Natural killer cell (primary cell): ENCODE measurements at regions of chr5 and their contacts with region 1.

Region 1: DNA sequence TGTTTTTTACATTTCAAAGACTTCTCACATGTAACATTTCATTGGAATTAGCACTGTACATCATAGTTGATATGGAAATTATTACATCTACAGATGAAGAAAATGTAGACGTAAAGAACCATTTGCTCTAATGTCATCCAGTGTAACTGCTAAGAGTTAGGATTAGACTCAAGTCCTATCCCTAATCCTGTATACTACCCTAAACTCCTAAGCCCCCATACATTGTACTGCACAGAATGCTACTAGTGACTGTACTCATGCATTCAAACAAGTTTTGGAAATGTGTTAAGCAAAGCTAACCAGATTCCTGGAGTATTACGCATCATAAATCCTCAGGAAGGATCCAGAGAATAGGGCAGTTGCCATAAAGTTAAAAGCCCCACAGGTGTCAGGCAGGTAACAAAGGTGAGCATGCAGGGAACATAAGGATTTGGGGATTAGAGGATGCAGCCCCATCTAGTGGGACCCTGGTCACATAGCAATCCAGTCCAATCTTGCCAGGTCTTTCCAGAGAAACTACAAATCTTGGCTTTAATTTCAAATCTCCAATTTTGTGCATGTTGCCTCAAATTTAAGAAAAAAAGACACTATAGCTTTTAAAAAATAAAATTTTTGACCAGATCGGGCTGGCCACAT is 32.0 kb downstream of the HAVCR1 start:
- DNase-seq: peak in 1 of 2 donors; percentile 36
- ATAC-seq: no peak
- H3K4me3 ChIP-seq: no peak overlapping the region
- H3K4me3 Mint-ChIP-seq: no peak overlapping the region
- H3K27ac ChIP-seq: peak overlapping the region; percentile 46
- H3K27ac Mint-ChIP-seq: peak overlapping the region; percentile 90 to 91
- H3K4me1 ChIP-seq: peaks cover 70% of the 10 kb centered on the region
- H3K4me1 Mint-ChIP-seq: peaks cover 78 to 89% of the 10 kb centered on the region in 2 donors
- H3K27me3 ChIP-seq: no peaks in the 10 kb centered on the region
- H3K27me3 Mint-ChIP-seq: no peaks in the 10 kb centered on the region
- CTCF ChIP-seq: no peak

Region 2: GRCh38 chr5:155767470-155767869 is 1259.4 kb before region 1 on chr5:
- intact Hi-C with region 1: loop called (anchors 5 kb)
- DNase-seq: peak in 1 of 2 donors; percentile 66
- ATAC-seq: peak; percentile 79 to 93 (median 88)
- H3K4me3 ChIP-seq: no peak overlapping the region
- H3K4me3 Mint-ChIP-seq: peak overlapping the region; percentile 43
- H3K27ac ChIP-seq: peak overlapping the region; percentile 70
- H3K27ac Mint-ChIP-seq: peak overlapping the region; percentile 84 to 88
- H3K4me1 ChIP-seq: peaks cover 36% of the 10 kb centered on the region
- H3K4me1 Mint-ChIP-seq: peaks cover 34 to 46% of the 10 kb centered on the region in 2 donors
- H3K27me3 ChIP-seq: no peaks in the 10 kb centered on the region
- H3K27me3 Mint-ChIP-seq: no peaks in the 10 kb centered on the region
- CTCF ChIP-seq: no peak

Region 3: DNA sequence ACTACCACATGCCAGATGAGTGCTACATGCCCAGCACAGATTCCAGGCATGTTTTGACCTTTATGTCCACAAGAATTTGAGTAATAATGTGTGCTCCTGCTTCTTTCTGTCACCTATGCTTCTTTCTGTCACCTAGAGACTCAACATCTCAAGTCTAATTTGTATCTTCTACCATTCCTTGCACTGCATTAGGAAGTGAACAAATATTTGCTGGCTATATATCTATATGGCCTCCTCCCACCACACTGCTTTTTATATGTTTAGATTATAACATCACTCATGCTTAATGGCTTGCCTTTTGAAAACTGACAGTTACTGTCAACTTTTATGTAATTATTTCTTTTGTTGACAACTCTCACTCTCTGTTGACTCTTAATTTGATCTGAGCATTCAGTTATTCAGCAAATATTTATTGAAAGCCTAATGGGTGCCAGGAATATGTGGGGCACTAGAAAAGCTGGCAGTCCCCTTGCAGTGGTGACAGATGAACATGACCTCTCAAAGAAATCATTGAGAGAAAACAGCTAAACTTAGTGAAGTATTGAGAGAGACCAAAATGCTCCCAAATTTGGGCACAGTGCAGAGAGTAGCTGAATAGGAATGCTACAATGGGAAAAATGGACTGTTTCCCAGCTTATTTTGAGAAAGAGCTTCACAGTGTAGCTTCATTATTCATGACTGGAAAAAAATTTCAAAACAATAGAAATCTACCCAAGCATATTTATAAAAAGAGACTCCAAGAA is 442.2 kb before region 1 on chr5:
- intact Hi-C with region 1: no loop called
- DNase-seq: no peak
- ATAC-seq: no peak
- H3K4me3 ChIP-seq: no peak overlapping the region
- H3K4me3 Mint-ChIP-seq: no peak overlapping the region
- H3K27ac ChIP-seq: no peak overlapping the region
- H3K27ac Mint-ChIP-seq: no peak overlapping the region
- H3K4me1 ChIP-seq: no peaks in the 10 kb centered on the region
- H3K4me1 Mint-ChIP-seq: no peaks in the 10 kb centered on the region
- H3K27me3 ChIP-seq: no peaks in the 10 kb centered on the region
- H3K27me3 Mint-ChIP-seq: peaks cover 25 to 40% of the 10 kb centered on the region in 2 donors
- CTCF ChIP-seq: no peak

Region 4: DNA sequence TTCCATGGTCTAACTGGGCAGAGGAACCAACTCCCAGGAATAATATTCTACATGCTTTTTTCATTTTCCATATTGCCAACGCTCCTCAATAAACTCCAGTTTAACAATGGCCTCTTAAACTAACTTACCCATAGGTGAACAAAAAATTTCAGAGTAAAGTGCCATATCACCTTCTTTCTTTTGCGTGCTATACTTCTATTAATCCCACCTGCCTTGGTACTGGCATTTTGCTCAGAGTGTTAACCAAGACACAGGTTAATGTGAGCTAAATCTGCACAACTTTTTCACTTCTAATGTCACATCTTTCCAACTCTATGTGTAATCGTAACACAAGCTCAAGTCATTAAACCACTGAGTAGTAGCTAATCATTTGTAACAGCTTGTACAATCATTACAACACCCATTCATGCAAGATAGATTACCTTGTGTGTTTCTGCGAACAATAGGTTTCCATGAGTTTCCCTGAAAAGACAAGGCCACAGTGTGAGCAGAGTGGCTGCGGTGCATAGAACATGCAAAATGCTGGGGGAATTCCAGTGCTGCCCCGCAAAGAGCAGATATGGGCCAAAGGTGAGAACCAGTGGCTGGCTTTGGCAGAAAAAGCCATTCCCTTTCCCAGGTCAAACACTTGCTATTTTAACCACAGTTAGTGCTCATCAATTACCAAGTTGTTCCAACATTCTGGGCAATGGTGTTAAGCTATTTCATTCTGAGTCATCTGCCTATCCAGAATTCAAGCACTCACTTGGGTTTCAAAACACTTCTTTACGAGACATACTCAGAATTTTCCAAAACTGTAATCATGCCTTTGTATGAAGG is 106.7 kb before region 1 on chr5:
- intact Hi-C with region 1: loop called (anchors 2 kb)
- DNase-seq: peak; percentile 51 to 60
- ATAC-seq: peak; percentile 70 to 88 (median 77)
- H3K4me3 ChIP-seq: no peak overlapping the region
- H3K4me3 Mint-ChIP-seq: no peak overlapping the region
- H3K27ac ChIP-seq: peak overlapping the region; percentile 44
- H3K27ac Mint-ChIP-seq: peak overlapping the region; percentile 79 to 82
- H3K4me1 ChIP-seq: peaks cover 22% of the 10 kb centered on the region
- H3K4me1 Mint-ChIP-seq: peaks cover 67 to 73% of the 10 kb centered on the region in 2 donors
- H3K27me3 ChIP-seq: no peaks in the 10 kb centered on the region
- H3K27me3 Mint-ChIP-seq: no peaks in the 10 kb centered on the region
- CTCF ChIP-seq: no peak

Region 5: DNA sequence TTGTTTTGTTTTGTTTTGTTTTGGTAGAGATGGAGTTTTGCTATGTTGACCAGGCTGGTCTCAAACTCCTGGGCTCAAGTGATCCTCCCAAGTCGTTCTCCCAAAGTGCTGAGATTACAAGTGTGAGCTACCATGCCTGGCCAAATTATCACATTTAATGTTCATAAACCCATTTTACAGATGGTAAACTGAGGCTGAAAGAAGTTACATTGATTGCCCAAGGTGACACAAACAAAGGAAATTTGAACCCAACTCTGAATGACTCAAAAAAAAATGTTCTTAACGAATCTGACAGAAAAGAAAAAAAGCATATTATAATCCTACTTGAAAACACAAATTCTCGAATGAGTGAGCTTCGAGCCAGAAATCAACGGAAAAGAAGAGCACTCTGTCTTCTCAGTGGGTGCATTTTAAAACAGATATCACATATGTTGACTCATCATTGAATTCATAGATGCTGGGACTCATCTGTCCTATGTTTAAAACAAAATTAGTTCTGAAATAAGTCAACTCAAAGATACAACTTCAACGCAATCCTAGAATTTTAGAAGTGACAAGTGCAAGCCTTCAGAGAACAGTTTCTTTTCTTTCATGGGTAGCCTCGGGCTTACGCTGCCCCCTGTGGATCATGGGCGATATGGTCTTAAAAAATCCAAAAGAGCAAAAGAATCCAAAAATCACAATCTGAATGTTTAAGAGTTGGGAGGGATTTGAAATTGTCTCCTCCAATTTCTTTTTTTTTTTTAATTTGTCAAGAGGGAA is 92.3 kb before region 1 on chr5:
- intact Hi-C with region 1: loop called (anchors 2 kb)
- DNase-seq: peak; percentile 51 to 80
- ATAC-seq: peak; percentile 68 to 71 (median 69)
- H3K4me3 ChIP-seq: no peak overlapping the region
- H3K4me3 Mint-ChIP-seq: no peak overlapping the region
- H3K27ac ChIP-seq: no peak overlapping the region
- H3K27ac Mint-ChIP-seq: peak overlapping the region; percentile 65 to 78
- H3K4me1 ChIP-seq: peaks cover 28% of the 10 kb centered on the region
- H3K4me1 Mint-ChIP-seq: peaks cover 48 to 59% of the 10 kb centered on the region in 2 donors
- H3K27me3 ChIP-seq: no peaks in the 10 kb centered on the region
- H3K27me3 Mint-ChIP-seq: peaks cover 0 to 2% of the 10 kb centered on the region in 2 donors
- CTCF ChIP-seq: peak; percentile 93

Region 6: GRCh38 chr5:157108976-157109375 is 82.1 kb after region 1 on chr5 and contains the start of gene HAVCR2:
- intact Hi-C with region 1: loop called (anchors 2 kb)
- DNase-seq: peak; percentile 62 to 66
- ATAC-seq: peak; percentile 80 to 95 (median 90)
- H3K4me3 ChIP-seq: peak within 1 kb of the TSS; percentile 52
- H3K4me3 Mint-ChIP-seq: peak within 1 kb of the TSS; percentile 94
- H3K27ac ChIP-seq: peak within 1 kb of the TSS; percentile 73
- H3K27ac Mint-ChIP-seq: peak within 1 kb of the TSS; percentile 95 to 97
- H3K4me1 ChIP-seq: peaks cover 46% of the 10 kb centered on the region
- H3K4me1 Mint-ChIP-seq: peaks cover 58% of the 10 kb centered on the region in 2 donors
- H3K27me3 ChIP-seq: no peaks in the 10 kb centered on the region
- H3K27me3 Mint-ChIP-seq: no peaks in the 10 kb centered on the region
- CTCF ChIP-seq: no peak
- total RNA-seq, gene HAVCR2: 60.0 to 92.2 (median 74.3) TPM

Region 7: DNA sequence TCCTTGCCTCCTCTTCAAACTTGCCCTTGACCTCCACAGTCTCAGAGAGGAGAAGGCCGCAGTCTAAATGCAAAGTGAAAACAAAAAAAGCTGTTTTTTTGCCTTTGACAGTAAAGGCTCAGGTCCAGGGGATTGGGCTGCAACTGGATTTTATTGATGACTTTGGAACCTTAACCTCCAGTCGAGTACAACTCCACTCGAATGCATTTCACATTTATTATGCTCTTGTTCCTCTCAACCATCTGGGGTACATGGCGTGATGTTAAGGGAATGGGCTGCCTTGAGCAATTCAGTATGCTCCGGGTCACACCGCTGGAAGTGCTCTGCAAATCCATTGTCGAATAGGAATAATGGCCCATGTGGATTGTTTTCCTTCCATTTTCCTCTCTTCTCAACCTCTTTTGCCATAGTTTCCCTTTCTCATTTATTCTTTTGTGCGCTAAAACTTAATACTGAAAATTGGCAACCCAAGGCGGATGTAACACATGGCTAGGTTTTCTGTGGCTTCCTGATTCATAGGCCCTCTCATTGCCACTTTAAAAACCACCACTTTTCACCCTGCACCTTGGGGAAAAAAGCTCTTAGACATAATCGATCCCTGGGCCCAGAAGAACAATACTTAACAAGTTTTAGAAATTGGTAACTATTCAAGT is 188.1 kb after region 1 on chr5:
- intact Hi-C with region 1: loop called (anchors 5 kb)
- DNase-seq: peak in 1 of 2 donors; percentile 81
- ATAC-seq: peak; percentile 59 to 78 (median 66)
- H3K4me3 ChIP-seq: no peak overlapping the region
- H3K4me3 Mint-ChIP-seq: peak overlapping the region; percentile 89
- H3K27ac ChIP-seq: peak overlapping the region; percentile 73
- H3K27ac Mint-ChIP-seq: peak overlapping the region; percentile 86 to 92
- H3K4me1 ChIP-seq: peaks cover 76% of the 10 kb centered on the region
- H3K4me1 Mint-ChIP-seq: peaks cover 81 to 87% of the 10 kb centered on the region in 2 donors
- H3K27me3 ChIP-seq: no peaks in the 10 kb centered on the region
- H3K27me3 Mint-ChIP-seq: no peaks in the 10 kb centered on the region
- CTCF ChIP-seq: no peak

Region 8: GRCh38 chr5:157271740-157272271 is 244.9 kb after region 1 on chr5:
- intact Hi-C with region 1: loop called (anchors 5 kb)
- DNase-seq: peak; percentile 80 to 95
- ATAC-seq: peak; percentile 81 to 91 (median 91)
- H3K4me3 ChIP-seq: no peak overlapping the region
- H3K4me3 Mint-ChIP-seq: peak overlapping the region; percentile 89
- H3K27ac ChIP-seq: peak overlapping the region; percentile 86
- H3K27ac Mint-ChIP-seq: peak overlapping the region; percentile 93 to 99
- H3K4me1 ChIP-seq: peaks cover 73% of the 10 kb centered on the region
- H3K4me1 Mint-ChIP-seq: peaks cover 95 to 96% of the 10 kb centered on the region in 2 donors
- H3K27me3 ChIP-seq: no peaks in the 10 kb centered on the region
- H3K27me3 Mint-ChIP-seq: no peaks in the 10 kb centered on the region
- CTCF ChIP-seq: no peak

Region 9: DNA sequence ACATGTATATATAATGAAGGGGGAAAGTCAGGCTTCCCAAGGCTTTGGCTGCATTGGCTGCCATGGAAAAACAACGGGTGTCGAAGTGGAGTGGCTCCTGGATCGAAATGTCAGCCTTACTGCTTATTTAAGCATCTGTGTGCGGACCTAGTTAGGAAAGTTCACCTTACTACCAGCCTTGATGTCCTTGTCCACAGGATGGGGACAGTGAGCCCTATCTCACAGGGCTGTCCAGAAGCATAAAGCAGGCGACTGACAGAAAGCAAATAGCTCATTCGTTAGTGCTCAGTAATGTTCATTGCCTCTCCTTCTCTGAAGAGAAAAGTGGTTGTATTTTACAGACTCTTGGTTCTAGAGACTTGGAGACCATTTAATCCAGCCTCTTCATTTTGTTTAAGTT is 351.6 kb after region 1 on chr5:
- intact Hi-C with region 1: no loop called
- DNase-seq: no peak
- ATAC-seq: no peak
- H3K4me3 ChIP-seq: no peak overlapping the region
- H3K4me3 Mint-ChIP-seq: no peak overlapping the region
- H3K27ac ChIP-seq: no peak overlapping the region
- H3K27ac Mint-ChIP-seq: peak overlapping the region; percentile 75 to 82
- H3K4me1 ChIP-seq: no peaks in the 10 kb centered on the region
- H3K4me1 Mint-ChIP-seq: peaks cover 21 to 28% of the 10 kb centered on the region in 2 donors
- H3K27me3 ChIP-seq: no peaks in the 10 kb centered on the region
- H3K27me3 Mint-ChIP-seq: no peaks in the 10 kb centered on the region
- CTCF ChIP-seq: no peak